ENCODE measurements at regions of chr13 and their contacts with region 1.

Region 1: GRCh38 chr13:96690998-96691397 is 303.3 kb downstream of the OXGR1 start:
- DNase-seq: no peak
- H3K4me3 ChIP-seq: no peak overlapping the region
- H3K27ac ChIP-seq: no peak overlapping the region
- H3K4me1 ChIP-seq: no peaks in the 10 kb centered on the region
- H3K27me3 ChIP-seq: no peaks in the 10 kb centered on the region
- CTCF ChIP-seq: no peak
- POLR2A ChIP-seq: no peak

Region 2: DNA sequence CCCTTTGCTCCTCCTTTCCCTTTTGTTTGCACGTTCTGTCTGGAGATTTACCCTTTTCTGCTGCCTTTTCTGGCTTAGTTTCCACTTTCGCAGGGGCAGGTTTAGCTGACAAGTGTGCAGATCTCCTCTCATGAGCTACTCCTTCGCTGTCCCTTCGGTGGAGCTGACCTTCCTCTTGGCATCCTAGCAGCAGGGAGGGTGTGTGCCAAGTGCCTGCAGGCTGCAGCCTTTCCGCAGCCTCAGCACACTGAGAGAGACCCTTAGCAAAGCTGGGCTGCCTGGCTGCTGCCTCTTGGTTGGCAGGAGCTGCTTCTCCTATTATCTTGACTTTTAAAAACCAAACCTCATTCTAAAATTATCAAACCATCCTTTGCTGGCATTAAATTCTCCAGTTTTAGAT is 881.6 kb before region 1 on chr13:
- intact Hi-C with region 1: no loop called
- DNase-seq: no peak
- H3K4me3 ChIP-seq: no peak overlapping the region
- H3K27ac ChIP-seq: no peak overlapping the region
- H3K4me1 ChIP-seq: no peaks in the 10 kb centered on the region
- H3K27me3 ChIP-seq: no peaks in the 10 kb centered on the region
- CTCF ChIP-seq: no peak
- POLR2A ChIP-seq: no peak

Region 3: DNA sequence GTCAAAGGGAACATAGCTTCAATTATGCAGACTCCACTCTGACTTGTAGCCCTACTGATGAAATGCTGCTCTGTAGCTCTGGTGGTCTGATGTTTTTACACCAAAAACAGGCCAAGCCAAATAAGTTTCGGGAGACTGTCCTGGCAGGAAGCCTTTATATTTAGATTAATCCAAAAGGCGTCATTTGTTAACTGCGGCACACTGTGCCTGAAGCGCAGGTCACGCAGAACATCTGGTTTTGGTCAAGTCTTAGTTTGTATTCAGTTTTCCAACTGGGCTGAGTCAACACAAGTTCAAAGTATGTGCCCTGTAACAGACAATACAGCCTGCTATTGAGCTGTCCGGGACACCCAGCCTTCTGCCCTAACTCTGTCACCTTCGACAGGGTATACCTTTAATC is 1107.8 kb after region 1 on chr13:
- intact Hi-C with region 1: loop called (anchors 5 kb)
- DNase-seq: no peak
- H3K4me3 ChIP-seq: no peak overlapping the region
- H3K27ac ChIP-seq: no peak overlapping the region
- H3K4me1 ChIP-seq: no peaks in the 10 kb centered on the region
- H3K27me3 ChIP-seq: no peaks in the 10 kb centered on the region
- CTCF ChIP-seq: no peak
- POLR2A ChIP-seq: no peak